ENCODE measurements at regions of chrX and their contacts with region 1.

Region 1: DNA sequence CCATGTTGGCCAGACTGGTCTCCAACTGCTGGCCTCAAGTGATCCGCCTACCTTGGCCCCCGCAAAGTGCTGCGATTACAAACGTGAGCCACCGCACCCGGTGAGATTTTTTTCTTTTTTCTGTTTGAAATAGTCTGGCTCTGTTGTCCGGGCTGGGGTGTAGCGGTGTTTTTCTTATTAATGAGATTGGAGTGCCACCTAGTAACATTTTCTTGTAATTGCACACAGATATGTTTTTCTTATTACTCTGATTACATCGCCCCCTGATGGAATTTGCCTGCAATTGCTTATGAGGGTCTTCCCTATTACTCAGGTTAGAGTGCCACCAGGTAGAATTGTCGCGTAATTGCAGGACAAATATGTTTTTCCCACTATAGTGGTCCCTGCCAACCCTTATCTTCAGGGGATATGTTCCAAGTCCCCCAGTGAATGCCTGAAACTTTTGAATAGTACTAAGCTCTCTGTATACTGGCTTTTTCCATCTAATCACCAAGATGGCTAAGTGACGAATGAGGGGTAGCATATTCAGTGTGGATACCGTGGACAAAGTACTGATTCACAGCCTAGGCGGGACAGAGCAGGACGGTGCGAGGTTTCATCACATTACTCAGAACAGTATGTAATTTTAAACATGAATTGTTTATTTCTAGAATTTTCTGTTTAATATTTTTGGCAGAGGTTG is 8.6 kb upstream of the PDHA1 start:
- DNase-seq: no peak
- H3K4me3 ChIP-seq: no peak overlapping the region
- H3K27ac ChIP-seq: no peak overlapping the region
- H3K4me1 ChIP-seq: no peaks in the 10 kb centered on the region
- H3K27me3 ChIP-seq: no peaks in the 10 kb centered on the region
- CTCF ChIP-seq: no peak
- EP300 ChIP-seq: no peak
- POLR2A ChIP-seq: no peak

Region 2: DNA sequence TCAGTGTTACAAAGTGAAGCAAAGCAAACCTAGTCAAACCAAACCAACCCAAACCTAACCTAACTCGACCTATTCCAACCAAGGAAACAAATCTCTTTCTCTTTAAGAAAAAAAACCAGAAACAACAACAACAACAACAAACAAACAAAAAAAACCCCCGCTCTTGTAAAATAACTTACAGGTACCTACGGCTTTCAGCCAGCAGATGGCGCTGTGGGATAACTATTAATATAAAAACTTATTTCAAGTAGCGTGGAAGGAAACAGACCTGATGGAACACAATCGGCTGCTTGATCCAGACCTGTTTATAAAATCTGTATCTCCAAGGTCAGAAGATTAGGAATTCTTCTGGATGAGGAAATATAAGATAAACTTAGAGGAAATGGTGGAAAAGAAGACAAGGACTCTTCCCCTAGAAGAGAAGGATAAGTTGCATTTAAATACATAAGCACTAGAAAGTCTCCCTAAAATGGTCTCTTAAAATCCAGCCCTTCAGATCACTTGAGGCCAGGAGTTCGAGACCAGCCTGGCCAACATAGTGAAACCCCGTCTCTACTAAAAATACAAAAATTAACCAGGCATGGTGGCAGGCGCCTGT is 944.0 kb before region 1 on chrX:
- intact Hi-C with region 1: loop called (anchors 5 kb)
- DNase-seq: no peak
- H3K4me3 ChIP-seq: no peak overlapping the region
- H3K27ac ChIP-seq: no peak overlapping the region
- H3K4me1 ChIP-seq: no peaks in the 10 kb centered on the region
- H3K27me3 ChIP-seq: no peaks in the 10 kb centered on the region
- CTCF ChIP-seq: peak; percentile 66 to 88 (median 76)
- EP300 ChIP-seq: no peak
- POLR2A ChIP-seq: no peak

Region 3: GRCh38 chrX:18931972-18932371 is 403.1 kb before region 1 on chrX:
- intact Hi-C with region 1: loop called (anchors 10 kb)
- DNase-seq: no peak
- H3K4me3 ChIP-seq: no peak overlapping the region
- H3K27ac ChIP-seq: no peak overlapping the region
- H3K4me1 ChIP-seq: no peaks in the 10 kb centered on the region
- H3K27me3 ChIP-seq: no peaks in the 10 kb centered on the region
- CTCF ChIP-seq: peak in 2 of 3 experiments; percentile 30 to 32
- EP300 ChIP-seq: no peak
- POLR2A ChIP-seq: no peak

Region 4: DNA sequence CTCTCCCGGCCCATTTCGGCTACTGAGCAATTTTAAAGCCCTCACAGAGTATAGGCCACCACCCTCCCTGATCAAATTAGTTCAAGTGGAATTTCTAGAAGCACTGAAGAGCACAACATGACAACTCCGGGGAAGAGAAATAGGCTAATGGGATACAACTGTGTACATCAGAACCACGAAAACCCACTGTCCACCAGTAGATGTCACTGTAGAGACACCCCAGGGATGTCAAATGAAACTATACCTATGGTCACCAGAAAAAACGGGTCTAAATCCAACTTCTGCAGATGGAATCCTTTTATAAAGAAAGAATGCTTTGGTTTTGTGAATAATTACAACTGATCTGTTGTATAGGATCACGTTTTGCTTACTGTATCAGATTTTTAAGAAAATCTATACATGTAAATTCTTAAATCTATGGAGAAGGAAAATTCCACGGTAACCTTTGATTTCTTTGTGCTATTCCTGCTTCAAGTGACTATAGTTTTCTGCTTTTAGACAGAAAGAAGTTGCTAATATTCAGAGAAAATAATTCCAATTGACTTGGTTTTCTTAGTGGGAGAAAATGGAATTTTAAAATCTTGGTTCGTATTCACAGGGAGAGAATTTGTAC is 209.7 kb after region 1 on chrX:
- intact Hi-C with region 1: no loop called
- DNase-seq: no peak
- H3K4me3 ChIP-seq: no peak overlapping the region
- H3K27ac ChIP-seq: no peak overlapping the region
- H3K4me1 ChIP-seq: no peaks in the 10 kb centered on the region
- H3K27me3 ChIP-seq: no peaks in the 10 kb centered on the region
- CTCF ChIP-seq: peak; percentile 49 to 69 (median 63)
- EP300 ChIP-seq: no peak
- POLR2A ChIP-seq: no peak